Dorsolateral prefrontal cortex (tissue), 120 donors: ENCODE measurements at regions of chr2 and their contacts with region 1.

Region 1: DNA sequence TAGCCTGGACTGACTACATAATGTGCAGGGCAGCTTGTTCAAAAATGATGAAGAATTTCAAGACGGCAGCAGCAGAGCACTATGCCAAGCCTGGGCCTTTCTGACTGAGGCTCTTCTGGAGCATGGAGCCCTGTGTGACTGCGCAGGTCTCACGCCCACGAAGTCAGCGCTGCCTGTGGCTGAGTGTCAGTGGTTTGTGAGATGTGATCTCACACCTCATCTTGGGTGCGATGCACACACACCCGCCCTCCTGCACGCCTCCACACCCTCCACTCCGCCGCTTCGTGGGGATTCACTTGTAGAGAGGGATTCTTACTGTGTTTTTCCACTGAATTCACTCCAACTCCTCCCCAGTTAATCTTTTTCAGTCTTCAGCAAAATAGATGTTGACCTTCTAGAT is 103.9 kb downstream of the VIT start:
- DNase-seq: peak in 8 of 10 donors; percentile 43 to 87 (median 72)
- H3K4me3 ChIP-seq: no peak overlapping the region
- H3K27ac ChIP-seq: peak overlapping the region in 19 of 59 donors; percentile 17 to 78 (median 53)
- H3K27me3 ChIP-seq: no peaks in the 10 kb centered on the region
- CTCF ChIP-seq: no peak

Region 2: GRCh38 chr2:36147670-36148390 is 652.6 kb before region 1 on chr2:
- intact Hi-C with region 1: no loop called
- DNase-seq: no peak
- H3K4me3 ChIP-seq: no peak overlapping the region
- H3K27ac ChIP-seq: no peak overlapping the region
- H3K27me3 ChIP-seq: peaks cover 0 to 3% (median 0%) of the 10 kb centered on the region in 45 donors
- CTCF ChIP-seq: no peak

Region 3: GRCh38 chr2:36812196-36812595 is 11.8 kb after region 1 on chr2:
- intact Hi-C with region 1: loop called in 1 of 2 experiments (anchors 1 kb)
- DNase-seq: no peak
- H3K4me3 ChIP-seq: no peak overlapping the region
- H3K27ac ChIP-seq: peak overlapping the region in 13 of 59 donors; percentile 4 to 65 (median 36)
- H3K27me3 ChIP-seq: no peaks in the 10 kb centered on the region
- CTCF ChIP-seq: no peak